ENCODE measurements at regions of chr1 and their contacts with region 1.

Region 1: DNA sequence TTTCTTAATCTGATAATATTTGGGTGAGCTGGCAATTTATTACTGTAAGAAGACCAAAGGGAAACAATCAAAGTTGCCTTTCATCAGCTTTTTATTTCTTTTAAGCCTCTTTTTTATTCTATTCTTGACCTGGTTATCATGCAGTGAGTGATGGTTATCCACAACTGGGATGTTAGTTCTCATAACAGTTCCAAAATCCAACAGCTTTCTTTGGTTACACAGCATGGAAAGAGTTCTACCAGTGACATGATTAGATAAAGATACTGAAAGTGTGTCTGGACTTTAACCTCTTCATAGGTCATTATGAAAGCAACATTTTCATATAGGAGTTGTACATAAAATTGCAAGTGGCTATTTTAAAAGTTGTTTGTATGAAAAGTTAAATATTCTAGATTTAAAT is 163.0 kb downstream of the SYT2 start:
- DNase-seq: no peak
- H3K4me3 ChIP-seq: no peak overlapping the region
- H3K27ac ChIP-seq: no peak overlapping the region
- H3K4me1 ChIP-seq: peaks cover 13% of the 10 kb centered on the region
- H3K27me3 ChIP-seq: no peaks in the 10 kb centered on the region
- CTCF ChIP-seq: no peak
- EP300 ChIP-seq: no peak
- POLR2A ChIP-seq: no peak

Region 2: GRCh38 chr1:202565890-202566602 is 18.8 kb after region 1 on chr1:
- intact Hi-C with region 1: loop called in 1 of 4 experiments (anchors 2 kb)
- DNase-seq: no peak
- H3K4me3 ChIP-seq: no peak overlapping the region
- H3K27ac ChIP-seq: peak overlapping the region; percentile 43 to 57
- H3K4me1 ChIP-seq: peaks cover 34% of the 10 kb centered on the region
- H3K27me3 ChIP-seq: no peaks in the 10 kb centered on the region
- CTCF ChIP-seq: no peak
- EP300 ChIP-seq: no peak
- POLR2A ChIP-seq: no peak

Region 3: GRCh38 chr1:202625416-202626360 is 78.5 kb after region 1 on chr1:
- intact Hi-C with region 1: no loop called
- DNase-seq: peak; percentile 69 to 86 (median 76)
- H3K4me3 ChIP-seq: no peak overlapping the region
- H3K27ac ChIP-seq: no peak overlapping the region
- H3K4me1 ChIP-seq: peaks cover 9% of the 10 kb centered on the region
- H3K27me3 ChIP-seq: no peaks in the 10 kb centered on the region
- CTCF ChIP-seq: peak; percentile 53 to 59 (median 53)
- EP300 ChIP-seq: no peak
- POLR2A ChIP-seq: no peak

Region 4: DNA sequence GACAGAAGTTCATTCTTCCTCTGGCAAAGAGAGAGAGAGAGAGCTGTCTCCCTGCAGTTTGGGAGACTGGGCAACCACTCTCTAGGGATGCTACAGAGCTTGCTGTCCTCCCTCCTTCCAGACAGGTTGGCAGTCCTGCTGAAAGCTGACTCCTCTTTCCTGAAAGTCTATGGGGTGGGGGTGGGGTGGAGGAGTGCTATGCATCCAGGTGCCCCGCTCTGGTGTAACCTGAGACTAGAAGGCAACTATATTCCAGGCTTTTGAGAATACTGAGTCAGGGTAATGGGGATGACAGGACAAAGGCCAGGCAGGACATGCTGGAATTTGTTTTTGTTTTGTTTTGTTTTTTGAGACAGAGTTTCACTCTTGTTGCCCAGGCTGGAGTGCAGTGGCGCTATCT is 1002.1 kb after region 1 on chr1:
- intact Hi-C with region 1: no loop called
- DNase-seq: no peak
- H3K4me3 ChIP-seq: no peak overlapping the region
- H3K27ac ChIP-seq: no peak overlapping the region
- H3K4me1 ChIP-seq: no peaks in the 10 kb centered on the region
- H3K27me3 ChIP-seq: no peaks in the 10 kb centered on the region
- CTCF ChIP-seq: no peak
- EP300 ChIP-seq: no peak
- POLR2A ChIP-seq: no peak